ENCODE measurements at regions of chr2 and their contacts with region 1.

Region 1: GRCh38 chr2:27086090-27086723 is 365 bp upstream of the KHK start:
- H3K4me3 ChIP-seq: peak overlapping the region; percentile 46
- H3K27ac ChIP-seq: peak overlapping the region; percentile 72
- H3K4me1 ChIP-seq: peaks cover 8% of the 10 kb centered on the region
- CTCF ChIP-seq: peak; percentile 71

Region 2: DNA sequence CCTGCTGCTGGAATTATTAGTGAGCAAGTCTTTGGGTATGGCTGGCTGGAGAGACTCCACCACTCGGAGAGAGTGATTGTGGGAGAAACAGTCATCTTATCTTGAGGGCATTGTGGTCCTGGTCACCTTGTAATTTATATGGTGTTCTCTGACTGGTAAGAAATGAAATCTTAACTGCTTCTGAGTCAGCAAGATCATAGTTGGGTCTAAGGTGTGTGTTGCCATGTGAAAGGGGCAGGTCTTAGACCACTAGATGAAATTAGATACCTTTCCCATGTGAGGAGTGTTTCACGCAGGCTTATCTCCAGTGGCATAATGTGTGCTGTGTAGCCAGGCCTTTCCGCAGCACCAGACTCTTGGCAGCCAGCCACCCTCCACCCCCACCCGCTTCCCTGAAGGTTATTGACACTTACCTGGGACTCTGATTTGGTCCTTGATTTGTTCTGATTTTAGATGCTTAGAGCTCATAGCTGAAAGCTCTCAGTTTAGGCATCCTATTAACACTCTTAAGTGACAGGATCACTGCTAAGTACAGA is 108.1 kb before region 1 on chr2:
- CTCF ChIA-PET with region 1: no interaction called
- POLR2A ChIA-PET with region 1: no interaction called
- H3K4me3 ChIP-seq: no peak overlapping the region
- H3K27ac ChIP-seq: no peak overlapping the region
- H3K4me1 ChIP-seq: peaks cover 5% of the 10 kb centered on the region; the same call in 1 of the 2 replicates
- CTCF ChIP-seq: no peak

Region 3: GRCh38 chr2:27050281-27050995 is 35.8 kb before region 1 on chr2:
- CTCF ChIA-PET with region 1: interaction called, 7 read pairs
- POLR2A ChIA-PET with region 1: interaction called, 23 read pairs
- H3K4me3 ChIP-seq: peak overlapping the region; percentile 82
- H3K27ac ChIP-seq: peak overlapping the region; percentile 73
- H3K4me1 ChIP-seq: peaks cover 4% of the 10 kb centered on the region
- CTCF ChIP-seq: peak; percentile 72